MCF 10A (cell line): ENCODE measurements at regions of chr6 and their contacts with region 1.

Region 1: DNA sequence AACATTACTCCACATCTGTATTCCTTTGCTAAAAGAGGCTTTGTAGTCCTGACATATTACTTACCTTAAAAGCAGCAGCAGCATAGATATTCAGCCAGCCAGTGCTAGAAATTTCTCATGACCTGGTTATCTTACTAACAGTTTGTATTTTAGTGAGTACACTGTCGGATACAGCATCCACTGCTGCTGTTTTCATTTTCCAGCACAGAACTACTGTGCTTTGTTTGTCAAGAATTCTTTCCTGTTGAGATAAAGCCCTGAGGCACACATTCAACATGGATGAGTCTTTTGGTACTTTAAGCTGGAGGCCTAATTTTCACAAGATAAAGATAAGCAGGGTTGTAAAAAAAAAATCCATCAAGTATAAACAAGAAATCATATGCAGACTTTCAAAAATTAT is 311.2 kb upstream of the OPRM1 start:
- DNase-seq: peak; percentile 11
- H3K4me3 Mint-ChIP-seq: no peak overlapping the region
- H3K27ac Mint-ChIP-seq: no peak overlapping the region
- H3K4me1 Mint-ChIP-seq: no peaks in the 10 kb centered on the region
- H3K27me3 Mint-ChIP-seq: no peaks in the 10 kb centered on the region
- CTCF ChIP-seq: no peak

Region 2: DNA sequence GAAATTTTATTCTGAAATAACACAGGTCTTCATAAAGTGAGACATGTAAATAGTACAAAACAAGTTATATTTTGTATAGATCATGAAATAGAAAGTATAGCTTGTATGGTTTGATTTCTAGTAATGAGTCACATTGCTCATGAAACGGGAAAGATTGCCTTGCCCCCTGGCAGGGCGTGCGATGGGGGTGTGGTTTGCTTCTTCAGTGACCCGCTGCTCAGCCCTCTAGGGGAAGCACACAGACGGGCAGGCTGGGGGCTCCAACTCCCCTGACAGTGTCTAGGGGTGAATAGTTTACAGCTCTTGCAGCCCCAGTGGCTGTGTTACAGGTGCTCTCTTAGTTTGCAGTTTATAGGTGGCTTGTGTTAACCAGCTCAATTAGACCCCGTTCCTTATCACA is 426.3 kb before region 1 on chr6:
- CTCF ChIA-PET with region 1: no interaction called
- POLR2A ChIA-PET with region 1: no interaction called
- intact Hi-C with region 1: loop called (anchors 5 kb)
- DNase-seq: peak; percentile 11
- H3K4me3 Mint-ChIP-seq: no peak overlapping the region
- H3K27ac Mint-ChIP-seq: no peak overlapping the region
- H3K4me1 Mint-ChIP-seq: no peaks in the 10 kb centered on the region
- H3K27me3 Mint-ChIP-seq: no peaks in the 10 kb centered on the region
- CTCF ChIP-seq: no peak